A673 (cell line): ENCODE measurements at regions of chr7 and their contacts with region 1.

Region 1: DNA sequence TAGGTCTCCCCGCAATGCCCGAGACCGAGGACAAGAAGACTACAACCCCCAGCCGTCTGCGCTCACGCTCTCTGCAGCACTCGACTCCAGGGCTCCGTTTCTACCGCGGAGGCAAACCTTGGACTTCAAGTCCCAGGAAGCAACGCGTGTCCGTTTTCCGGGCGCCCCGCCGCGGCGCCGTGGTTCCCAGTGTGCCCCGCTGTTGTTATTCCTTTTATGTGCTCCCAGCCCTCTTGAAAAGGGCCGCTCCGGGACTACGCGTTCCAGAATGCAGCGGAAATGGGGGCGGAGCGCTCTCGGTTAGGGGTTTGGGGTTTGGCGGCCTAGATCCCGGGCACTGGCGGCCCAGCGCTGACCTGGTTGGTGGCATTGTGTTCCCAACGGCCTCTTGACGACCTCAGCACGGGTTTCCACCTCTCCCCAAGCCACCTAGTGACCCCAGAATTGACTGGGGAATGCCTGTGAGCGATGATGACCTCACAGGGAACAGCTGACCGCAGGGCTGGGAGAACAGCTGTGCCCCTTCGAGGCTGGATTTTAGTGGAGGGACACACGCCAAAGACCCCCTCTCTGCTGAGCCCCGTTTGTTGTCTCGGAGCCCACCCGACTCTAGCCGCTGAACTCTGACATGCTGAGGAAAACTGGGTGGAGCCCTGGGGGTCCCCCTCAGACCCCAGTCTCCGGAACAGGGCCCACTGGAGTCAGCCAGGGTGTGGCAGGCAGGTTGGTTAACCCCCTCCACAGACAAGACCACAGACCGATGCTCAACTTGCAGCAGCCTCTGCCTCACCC is 488 bp upstream of the CDK5 start:
- DNase-seq: peak; percentile 100
- H3K4me3 ChIP-seq: peak overlapping the region; percentile 99
- H3K27ac ChIP-seq: peak overlapping the region; percentile 78
- H3K4me1 ChIP-seq: peaks cover 34% of the 10 kb centered on the region
- H3K27me3 ChIP-seq: no peaks in the 10 kb centered on the region
- CTCF ChIP-seq: no peak

Region 2: GRCh38 chr7:151028131-151028947 is 29.8 kb before region 1 on chr7 and contains the start of gene ABCB8:
- CTCF ChIA-PET with region 1: interaction called, 3 read pairs
- POLR2A ChIA-PET with region 1: no interaction called
- intact Hi-C with region 1: loop called (anchors 2 kb)
- DNase-seq: peak; percentile 99
- H3K4me3 ChIP-seq: peak within 1 kb of the TSS; percentile 62
- H3K27ac ChIP-seq: peak within 1 kb of the TSS; percentile 57
- H3K4me1 ChIP-seq: no peaks in the 10 kb centered on the region
- H3K27me3 ChIP-seq: no peaks in the 10 kb centered on the region
- CTCF ChIP-seq: peak; percentile 43
- total RNA-seq, gene ABCB8: 50.9 and 57.6 TPM in 2 replicates

Region 3: GRCh38 chr7:151232091-151232916 is 174.1 kb after region 1 on chr7 and contains the start of gene CHPF2:
- CTCF ChIA-PET with region 1: no interaction called
- POLR2A ChIA-PET with region 1: no interaction called
- intact Hi-C with region 1: loop called (anchors 5 kb)
- DNase-seq: peak; percentile 91
- H3K4me3 ChIP-seq: peak within 1 kb of the TSS; percentile 100
- H3K27ac ChIP-seq: peak within 1 kb of the TSS; percentile 80
- H3K4me1 ChIP-seq: peaks cover 18% of the 10 kb centered on the region
- H3K27me3 ChIP-seq: no peaks in the 10 kb centered on the region
- CTCF ChIP-seq: no peak
- total RNA-seq, gene CHPF2: 22.5 and 27.1 TPM in 2 replicates

Region 4: GRCh38 chr7:151608031-151608551 is 549.9 kb after region 1 on chr7:
- CTCF ChIA-PET with region 1: no interaction called
- POLR2A ChIA-PET with region 1: no interaction called
- intact Hi-C with region 1: no loop called
- DNase-seq: no peak
- H3K4me3 ChIP-seq: no peak overlapping the region
- H3K27ac ChIP-seq: no peak overlapping the region
- H3K4me1 ChIP-seq: no peaks in the 10 kb centered on the region
- H3K27me3 ChIP-seq: no peaks in the 10 kb centered on the region
- CTCF ChIP-seq: no peak